ENCODE measurements at regions of chr16 and their contacts with region 1.

Region 1: DNA sequence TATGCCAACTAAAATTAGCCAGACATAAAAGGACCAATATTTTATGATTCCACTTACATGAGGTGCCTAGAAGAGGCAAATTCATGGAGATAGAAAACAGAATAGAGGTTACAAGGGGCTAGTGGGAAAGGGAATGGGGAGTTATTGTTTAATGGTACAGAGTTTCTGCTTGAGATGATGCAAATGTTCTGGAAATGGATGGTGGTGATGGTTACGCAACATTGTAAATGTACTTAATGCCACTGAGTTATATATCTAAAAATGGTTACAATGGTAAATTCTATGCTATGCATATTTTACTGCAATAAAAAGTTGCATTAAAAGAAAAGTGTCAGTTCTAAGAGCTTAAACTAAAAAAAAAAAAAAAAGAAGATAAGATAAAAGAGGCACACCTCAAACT is 17.9 kb downstream of the MT1X start:
- DNase-seq: no peak
- H3K4me3 ChIP-seq: no peak overlapping the region
- H3K27ac ChIP-seq: no peak overlapping the region
- H3K4me1 ChIP-seq: peaks cover 0 to 2% (median 0%) of the 10 kb centered on the region in 4 experiments; a peak in 1 of 7 replicates
- H3K27me3 ChIP-seq: no peaks in the 10 kb centered on the region; a peak in 2 of 7 replicates
- CTCF ChIP-seq: no peak
- EP300 ChIP-seq: no peak
- POLR2A ChIP-seq: no peak
- RAD21 ChIP-seq: no peak

Region 2: DNA sequence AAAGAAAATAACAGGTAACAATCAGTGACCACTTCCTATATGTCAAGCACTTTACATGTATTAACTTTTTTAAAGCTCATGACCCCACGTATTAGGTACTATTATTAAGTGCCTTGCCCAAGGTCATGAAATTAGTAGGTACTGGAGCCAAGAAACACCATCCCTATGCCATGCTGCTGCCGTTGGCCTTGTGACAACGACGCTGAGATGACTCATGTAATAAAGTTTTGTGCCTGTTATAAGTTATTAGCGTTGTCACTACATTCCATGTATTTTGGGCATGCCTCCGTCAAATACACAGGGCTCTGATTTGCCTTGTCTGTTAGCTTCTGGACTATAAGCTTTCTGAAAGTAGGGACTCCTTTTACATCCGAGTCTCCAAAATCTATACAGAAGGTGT is 181.8 kb before region 1 on chr16:
- CTCF ChIA-PET with region 1: interaction called, 12 read pairs
- POLR2A ChIA-PET with region 1: no interaction called
- DNase-seq: no peak
- H3K4me3 ChIP-seq: no peak overlapping the region
- H3K27ac ChIP-seq: no peak overlapping the region
- H3K4me1 ChIP-seq: no peaks in the 10 kb centered on the region; a peak in 1 of 7 replicates
- H3K27me3 ChIP-seq: peaks cover 0 to 7% (median 1%) of the 10 kb centered on the region in 4 experiments; a peak in 4 of 7 replicates
- CTCF ChIP-seq: no peak
- EP300 ChIP-seq: no peak
- POLR2A ChIP-seq: no peak
- RAD21 ChIP-seq: no peak

Region 3: DNA sequence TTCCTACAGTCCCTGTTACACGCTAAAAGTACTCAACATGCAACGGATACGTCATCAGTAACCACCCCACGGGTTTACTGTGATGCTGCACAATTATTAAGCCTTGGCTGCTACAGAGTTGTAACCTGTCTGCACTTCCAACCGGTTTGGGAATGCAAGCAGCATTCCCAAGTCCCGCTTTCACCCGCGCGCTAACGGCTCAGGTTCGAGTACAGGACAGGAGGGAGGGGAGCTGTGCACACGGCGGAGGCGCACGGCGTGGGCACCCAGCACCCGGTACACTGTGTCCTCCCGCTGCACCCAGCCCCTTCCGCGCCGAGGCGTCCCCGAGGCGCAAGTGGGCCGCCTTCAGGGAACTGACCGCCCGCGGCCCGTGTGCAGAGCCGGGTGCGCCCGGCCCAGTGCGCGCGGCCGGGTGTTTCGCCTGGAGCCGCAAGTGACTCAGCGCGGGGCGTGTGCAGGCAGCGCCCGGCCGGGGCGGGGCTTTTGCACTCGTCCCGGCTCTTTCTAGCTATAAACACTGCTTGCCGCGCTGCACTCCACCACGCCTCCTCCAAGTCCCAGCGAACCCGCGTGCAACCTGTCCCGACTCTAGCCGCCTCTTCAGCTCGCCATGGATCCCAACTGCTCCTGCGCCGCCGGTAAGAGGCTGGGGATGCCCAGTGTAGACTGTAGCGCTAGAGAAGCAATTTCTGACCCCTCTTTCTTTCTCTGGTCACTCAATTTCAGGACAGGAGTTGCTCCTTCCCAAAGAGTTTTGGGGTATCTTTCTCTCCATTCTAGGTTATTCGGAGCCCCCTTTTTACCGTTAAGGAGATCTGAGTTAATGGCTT is 91.9 kb before region 1 on chr16 and contains the start of gene MT2A:
- CTCF ChIA-PET with region 1: interaction called, 85 read pairs
- POLR2A ChIA-PET with region 1: interaction called, 3 read pairs
- DNase-seq: peak in 1 of 2 experiments; percentile 74
- H3K4me3 ChIP-seq: peak within 1 kb of the TSS; percentile 35 to 62 (median 47)
- H3K27ac ChIP-seq: no peak within 1 kb of the TSS
- H3K4me1 ChIP-seq: peaks cover 7 to 21% (median 10%) of the 10 kb centered on the region in 4 experiments
- H3K27me3 ChIP-seq: peaks cover 27 to 64% (median 52%) of the 10 kb centered on the region in 4 experiments
- CTCF ChIP-seq: no peak
- EP300 ChIP-seq: no peak
- POLR2A ChIP-seq: no peak
- RAD21 ChIP-seq: no peak
- total RNA-seq, gene MT2A: 9.2 and 9.5 TPM in 2 replicates

Region 4: GRCh38 chr16:56643080-56643778 is 57.0 kb before region 1 on chr16:
- CTCF ChIA-PET with region 1: interaction called, 13 read pairs
- POLR2A ChIA-PET with region 1: interaction called, 3 read pairs
- DNase-seq: peak in 1 of 2 experiments; percentile 67
- H3K4me3 ChIP-seq: peak overlapping the region; percentile 18 to 51 (median 34); a peak in 7 of 8 replicates
- H3K27ac ChIP-seq: no peak overlapping the region
- H3K4me1 ChIP-seq: peaks cover 3 to 20% (median 7%) of the 10 kb centered on the region in 4 experiments
- H3K27me3 ChIP-seq: peaks cover 84 to 100% (median 99%) of the 10 kb centered on the region in 4 experiments
- CTCF ChIP-seq: peak; percentile 39 to 50 (median 42)
- EP300 ChIP-seq: no peak
- POLR2A ChIP-seq: no peak
- RAD21 ChIP-seq: peak; percentile 32 to 36

Region 5: GRCh38 chr16:56673921-56674320 is 26.3 kb before region 1 on chr16:
- CTCF ChIA-PET with region 1: interaction called, 62 read pairs
- POLR2A ChIA-PET with region 1: interaction called, 24 read pairs
- DNase-seq: no peak
- H3K4me3 ChIP-seq: no peak overlapping the region
- H3K27ac ChIP-seq: no peak overlapping the region
- H3K4me1 ChIP-seq: peaks cover 3 to 25% (median 15%) of the 10 kb centered on the region in 4 experiments
- H3K27me3 ChIP-seq: peaks cover 30 to 71% (median 52%) of the 10 kb centered on the region in 4 experiments
- CTCF ChIP-seq: peak; percentile 60 to 73 (median 64)
- EP300 ChIP-seq: no peak
- POLR2A ChIP-seq: no peak
- RAD21 ChIP-seq: peak; percentile 68 to 78

Region 6: DNA sequence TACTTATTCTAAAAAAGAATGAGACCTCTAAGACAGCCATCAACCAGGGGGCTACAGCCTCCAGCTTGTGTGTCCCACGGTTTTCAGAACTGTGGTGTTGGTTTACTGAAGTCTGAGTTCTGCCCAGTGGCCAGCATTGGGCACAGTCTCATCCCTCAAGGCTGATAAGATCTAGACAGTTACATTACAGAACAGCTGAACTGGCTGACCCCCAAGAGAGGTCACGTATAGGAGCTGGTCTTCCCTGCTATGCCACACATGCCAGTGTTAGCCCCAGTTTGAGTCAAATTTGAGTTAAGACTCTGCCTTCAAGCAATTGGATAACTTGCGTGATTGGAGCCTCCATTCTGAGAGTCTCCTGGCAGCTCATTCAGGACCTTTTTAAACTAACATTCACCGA is 14.9 kb after region 1 on chr16:
- CTCF ChIA-PET with region 1: interaction called, 26 read pairs
- POLR2A ChIA-PET with region 1: no interaction called
- DNase-seq: no peak
- H3K4me3 ChIP-seq: no peak overlapping the region
- H3K27ac ChIP-seq: no peak overlapping the region
- H3K4me1 ChIP-seq: no peaks in the 10 kb centered on the region
- H3K27me3 ChIP-seq: peaks cover 0 to 3% (median 0%) of the 10 kb centered on the region in 4 experiments; a peak in 1 of 7 replicates
- CTCF ChIP-seq: no peak
- EP300 ChIP-seq: no peak
- POLR2A ChIP-seq: no peak
- RAD21 ChIP-seq: no peak

Region 7: DNA sequence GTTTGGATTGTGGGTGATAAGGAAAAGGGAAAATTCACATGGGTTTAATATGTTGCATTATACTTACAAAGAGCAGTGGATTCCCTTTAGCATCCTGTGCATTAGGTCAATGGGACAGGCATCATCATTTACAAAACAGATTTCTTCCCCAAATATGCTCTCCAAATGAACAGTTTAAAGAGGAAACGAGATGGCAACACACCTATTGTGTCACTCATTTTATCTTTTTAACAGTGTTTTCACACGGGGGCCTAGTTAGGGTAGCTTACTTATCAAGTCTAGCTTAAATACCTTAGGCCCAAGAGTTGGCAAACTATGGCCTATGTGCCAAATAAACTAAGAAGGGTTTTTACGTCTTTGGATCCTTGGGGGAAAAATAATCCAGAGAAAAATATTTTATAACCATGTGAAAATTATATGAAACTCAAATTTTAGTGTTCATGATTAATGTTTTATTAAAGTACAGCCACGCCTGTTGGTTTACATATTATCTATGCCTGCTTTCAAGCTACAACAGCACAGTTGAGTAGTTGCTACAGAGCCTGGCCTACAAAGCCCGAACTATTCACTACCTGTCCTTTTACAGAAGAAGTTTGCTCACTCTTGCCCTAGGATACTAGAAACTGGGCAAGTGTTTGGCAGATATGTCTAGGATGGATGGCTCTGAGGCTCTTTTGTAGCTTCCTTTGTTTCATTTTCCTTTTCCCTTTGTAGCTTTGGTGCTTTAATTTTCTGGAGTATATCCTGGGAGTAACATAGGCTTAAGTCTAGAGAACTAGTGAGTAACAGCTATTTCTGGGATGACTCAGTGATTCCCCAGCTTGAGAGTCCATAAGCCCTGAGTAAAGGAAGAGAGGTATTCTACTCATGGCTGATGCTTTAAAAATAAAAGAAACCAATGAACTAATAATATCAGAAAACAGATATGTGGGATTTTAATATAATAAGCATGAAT is 42.1 kb after region 1 on chr16:
- CTCF ChIA-PET with region 1: no interaction called
- POLR2A ChIA-PET with region 1: no interaction called
- DNase-seq: no peak
- H3K4me3 ChIP-seq: no peak overlapping the region
- H3K27ac ChIP-seq: no peak overlapping the region
- H3K4me1 ChIP-seq: peaks cover 0 to 5% (median 4%) of the 10 kb centered on the region in 4 experiments; a peak in 3 of 7 replicates
- H3K27me3 ChIP-seq: no peaks in the 10 kb centered on the region
- CTCF ChIP-seq: no peak
- EP300 ChIP-seq: no peak
- POLR2A ChIP-seq: no peak
- RAD21 ChIP-seq: no peak

Region 8: GRCh38 chr16:56767024-56767423 is 66.8 kb after region 1 on chr16:
- CTCF ChIA-PET with region 1: no interaction called
- POLR2A ChIA-PET with region 1: no interaction called
- DNase-seq: no peak
- H3K4me3 ChIP-seq: no peak overlapping the region
- H3K27ac ChIP-seq: no peak overlapping the region
- H3K4me1 ChIP-seq: no peaks in the 10 kb centered on the region
- H3K27me3 ChIP-seq: no peaks in the 10 kb centered on the region
- CTCF ChIP-seq: no peak
- EP300 ChIP-seq: no peak
- POLR2A ChIP-seq: no peak
- RAD21 ChIP-seq: no peak

Region 9: DNA sequence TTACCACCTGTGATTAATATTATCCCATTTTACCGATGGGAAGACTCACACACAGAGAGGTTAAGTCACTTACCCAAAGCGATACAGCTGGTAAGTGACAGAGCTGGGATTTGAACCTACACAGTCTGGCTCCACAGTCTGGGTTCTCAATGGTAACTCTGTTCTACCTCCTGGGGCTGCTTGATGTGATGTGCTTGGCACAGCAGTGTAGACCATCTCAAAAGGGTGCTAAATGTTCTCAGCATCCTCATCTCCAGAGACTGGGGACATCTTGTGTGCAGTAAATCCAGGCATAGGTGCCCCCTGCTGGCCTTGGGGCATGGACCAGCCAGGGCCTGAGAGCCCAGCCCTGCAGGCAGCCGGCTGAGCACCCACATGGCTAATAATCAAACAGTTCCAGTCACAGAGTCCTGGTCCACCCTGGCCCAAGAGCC is 1020.0 kb after region 1 on chr16:
- CTCF ChIA-PET with region 1: no interaction called
- POLR2A ChIA-PET with region 1: no interaction called
- DNase-seq: peak in 1 of 2 experiments; percentile 60
- H3K4me3 ChIP-seq: no peak overlapping the region
- H3K27ac ChIP-seq: no peak overlapping the region
- H3K4me1 ChIP-seq: no peaks in the 10 kb centered on the region
- H3K27me3 ChIP-seq: no peaks in the 10 kb centered on the region; a peak in 1 of 7 replicates
- CTCF ChIP-seq: peak; percentile 57 to 63 (median 61)
- EP300 ChIP-seq: no peak
- POLR2A ChIP-seq: no peak
- RAD21 ChIP-seq: peak; percentile 43 to 67

Measured in H1 (cell line).